Common myeloid progenitor, CD34-positive (primary cell): ENCODE measurements at regions of chr14 and their contacts with region 1.

Region 1: GRCh38 chr14:100108042-100108825 is 43.0 kb downstream of the EVL start:
- DNase-seq: peak; percentile 80 to 88 (median 84)
- H3K4me3 ChIP-seq: no peak overlapping the region
- H3K27ac ChIP-seq: no peak overlapping the region
- H3K4me1 ChIP-seq: peaks cover 6 to 48% (median 42%) of the 10 kb centered on the region in 4 experiments
- H3K27me3 ChIP-seq: no peaks in the 10 kb centered on the region

Region 2: DNA sequence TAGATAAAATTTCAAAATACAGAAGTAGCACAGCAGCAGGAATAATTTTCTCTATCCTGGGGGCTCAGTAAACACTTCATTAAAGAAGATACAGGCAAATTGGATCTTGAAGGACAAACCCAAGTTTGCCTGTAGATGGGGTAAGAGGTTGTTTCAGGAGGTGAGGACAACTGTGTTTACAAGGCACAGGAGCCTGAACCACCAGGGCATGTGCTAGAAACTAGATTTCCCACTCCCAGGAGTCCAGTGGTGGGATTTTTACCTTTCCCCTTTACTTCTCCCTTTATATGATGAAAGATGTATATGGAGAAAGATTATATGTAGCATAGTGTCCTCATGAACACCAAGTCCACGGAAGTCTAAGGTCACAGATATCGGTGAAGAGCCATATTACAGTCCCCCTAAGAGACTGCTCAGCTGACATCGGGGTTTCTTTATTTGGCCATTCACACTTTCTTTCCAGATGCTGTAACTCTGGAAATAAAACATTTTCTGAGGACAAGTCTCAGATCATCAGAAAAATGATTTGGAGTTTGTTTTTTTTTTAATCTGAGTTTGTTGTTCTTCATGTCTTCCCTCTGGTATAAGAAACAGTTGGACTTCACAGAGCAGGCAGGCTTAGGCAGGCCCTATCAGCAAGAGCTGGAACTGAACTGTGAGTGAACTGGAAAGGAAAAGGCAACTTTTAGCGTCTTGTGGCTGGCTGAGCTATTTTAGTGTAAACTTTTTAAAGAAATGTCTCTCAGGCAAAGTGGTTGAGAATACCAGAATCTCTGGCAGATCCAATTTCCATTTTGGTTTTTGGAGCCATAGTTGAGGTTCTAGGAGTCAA is 51.1 kb before region 1 on chr14:
- CTCF ChIA-PET with region 1: interaction called, 1,065 read pairs
- POLR2A ChIA-PET with region 1: no interaction called
- DNase-seq: peak; percentile 70 to 81 (median 79)
- H3K4me3 ChIP-seq: no peak overlapping the region
- H3K27ac ChIP-seq: no peak overlapping the region
- H3K4me1 ChIP-seq: peaks cover 12 to 56% (median 29%) of the 10 kb centered on the region in 4 experiments
- H3K27me3 ChIP-seq: no peaks in the 10 kb centered on the region

Region 3: DNA sequence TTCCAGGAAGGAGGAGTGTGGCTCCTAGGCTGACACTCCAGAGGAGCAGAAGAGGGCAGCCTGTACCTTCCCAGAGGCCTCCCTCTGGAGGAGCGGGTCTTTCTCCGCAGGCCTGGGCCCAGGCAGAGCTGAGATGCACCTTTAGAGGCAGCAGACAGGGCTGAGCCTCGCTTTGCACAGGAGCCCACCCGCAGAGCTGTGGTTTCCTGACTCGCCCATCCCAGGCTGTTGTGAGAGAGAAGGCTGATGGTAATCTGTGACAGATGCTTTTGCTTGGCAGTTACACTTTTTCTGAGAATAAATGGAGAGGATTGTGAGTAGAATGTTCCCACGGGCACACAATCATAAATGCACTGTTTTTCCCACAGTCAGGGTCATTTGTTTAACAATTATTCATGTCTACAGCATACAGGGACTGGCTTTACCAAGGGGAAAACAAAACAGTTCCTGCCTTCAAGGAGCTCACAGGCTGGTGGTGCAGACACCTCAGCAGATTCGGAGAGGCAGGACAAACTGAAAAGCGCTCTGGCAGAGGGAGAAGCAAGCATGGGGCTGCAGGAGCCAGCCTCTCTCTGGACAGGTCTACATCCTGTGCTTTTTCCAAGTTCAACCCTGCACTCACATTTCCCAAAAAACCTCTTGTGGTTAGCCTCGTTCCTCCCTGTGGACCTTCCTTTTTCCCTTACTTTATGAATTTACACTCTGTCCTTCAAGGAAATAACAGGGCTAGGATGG is 29.1 kb before region 1 on chr14:
- CTCF ChIA-PET with region 1: interaction called, 1,065 read pairs
- POLR2A ChIA-PET with region 1: interaction called, 6 read pairs
- DNase-seq: peak; percentile 73 to 95 (median 93)
- H3K4me3 ChIP-seq: peak overlapping the region in 5 of 7 experiments; percentile 15 to 57 (median 26)
- H3K27ac ChIP-seq: peak overlapping the region; percentile 62 to 65
- H3K4me1 ChIP-seq: peaks cover 45 to 95% (median 88%) of the 10 kb centered on the region in 4 experiments
- H3K27me3 ChIP-seq: no peaks in the 10 kb centered on the region

Region 4: DNA sequence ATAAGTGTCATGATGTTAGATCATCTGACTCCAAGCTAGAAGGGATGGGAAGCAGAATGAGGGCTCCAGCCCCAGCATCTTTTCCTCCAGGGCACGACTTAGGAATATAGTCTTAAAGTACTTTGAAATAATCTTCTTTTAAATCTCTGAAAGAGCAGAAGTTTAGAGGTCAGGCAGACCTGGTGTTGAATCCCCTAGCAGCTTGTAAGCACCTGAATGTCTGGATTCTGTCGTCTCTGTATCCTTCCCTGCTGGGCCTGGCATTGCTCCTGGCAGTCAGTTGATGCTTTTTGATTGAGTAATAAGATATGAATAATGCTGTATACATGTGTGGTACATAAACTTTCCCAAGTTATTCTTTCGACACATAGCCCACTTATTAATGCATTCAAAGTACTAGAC is 11.7 kb before region 1 on chr14:
- CTCF ChIA-PET with region 1: interaction called, 86 read pairs
- POLR2A ChIA-PET with region 1: no interaction called
- DNase-seq: no peak
- H3K4me3 ChIP-seq: no peak overlapping the region
- H3K27ac ChIP-seq: no peak overlapping the region
- H3K4me1 ChIP-seq: peaks cover 0 to under 1% (median 0%) of the 10 kb centered on the region in 4 experiments
- H3K27me3 ChIP-seq: no peaks in the 10 kb centered on the region

Region 5: DNA sequence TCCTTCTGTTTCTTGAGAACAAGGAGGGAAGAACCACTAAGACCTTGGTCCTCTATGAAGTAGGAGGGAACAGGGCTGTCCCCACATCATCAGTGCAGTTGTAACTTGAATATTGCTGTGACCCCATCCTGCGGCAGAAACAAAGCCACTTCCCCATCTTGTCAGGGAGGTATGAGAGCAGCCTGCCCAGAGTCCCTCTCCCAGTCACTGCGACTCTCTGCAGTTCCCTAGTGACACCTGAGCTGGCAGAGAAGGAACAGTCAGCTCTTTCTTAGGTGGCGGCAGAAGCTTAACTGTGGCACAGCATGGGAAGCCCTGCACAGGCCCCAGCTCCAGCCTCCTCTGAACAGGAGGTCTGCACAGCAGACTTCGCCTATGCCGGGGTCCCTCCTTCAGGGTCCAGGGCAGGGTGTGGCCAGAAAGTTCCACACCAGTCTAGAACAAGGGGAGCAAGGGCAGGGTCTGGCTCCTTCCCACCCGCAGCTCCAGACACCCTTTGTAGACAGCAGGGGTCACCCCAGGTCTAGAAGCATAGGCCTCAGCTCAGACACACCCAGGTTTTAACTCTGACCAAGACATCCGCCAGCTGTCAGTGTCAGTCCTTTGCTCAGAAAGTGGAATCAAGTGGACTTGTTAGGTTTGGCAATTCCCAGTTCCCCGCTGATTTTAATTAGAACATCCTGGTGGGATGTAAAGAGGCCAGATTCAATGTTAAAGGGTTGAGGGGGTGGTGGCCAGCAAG is 14.4 kb after region 1 on chr14:
- CTCF ChIA-PET with region 1: interaction called, 42 read pairs
- POLR2A ChIA-PET with region 1: no interaction called
- DNase-seq: peak in 2 of 3 donors; percentile 30 to 35
- H3K4me3 ChIP-seq: no peak overlapping the region
- H3K27ac ChIP-seq: no peak overlapping the region
- H3K4me1 ChIP-seq: peaks cover 0 to 7% (median 2%) of the 10 kb centered on the region in 4 experiments
- H3K27me3 ChIP-seq: no peaks in the 10 kb centered on the region